ENCODE measurements at regions of chr3 and their contacts with region 1.

Region 1: GRCh38 chr3:107429320-107430181 is 52.3 kb downstream of the CCDC54 start:
- DNase-seq: peak; percentile 77
- ATAC-seq: peak; percentile 74
- H3K4me3 Mint-ChIP-seq: peak overlapping the region; percentile 68
- H3K27ac Mint-ChIP-seq: no peak overlapping the region
- H3K4me1 Mint-ChIP-seq: peaks cover 20% of the 10 kb centered on the region
- H3K27me3 Mint-ChIP-seq: peaks cover 3% of the 10 kb centered on the region

Region 2: GRCh38 chr3:106068795-106069194 is 1360.8 kb before region 1 on chr3:
- CTCF ChIA-PET with region 1: no interaction called
- POLR2A ChIA-PET with region 1: no interaction called
- intact Hi-C with region 1: no loop called
- DNase-seq: no peak
- ATAC-seq: peak; percentile 98
- H3K4me3 Mint-ChIP-seq: no peak overlapping the region
- H3K27ac Mint-ChIP-seq: peak overlapping the region; percentile 53
- H3K4me1 Mint-ChIP-seq: peaks cover 15% of the 10 kb centered on the region
- H3K27me3 Mint-ChIP-seq: no peaks in the 10 kb centered on the region

Region 3: GRCh38 chr3:106814231-106814630 is 615.3 kb before region 1 on chr3:
- CTCF ChIA-PET with region 1: no interaction called
- POLR2A ChIA-PET with region 1: no interaction called
- intact Hi-C with region 1: no loop called
- DNase-seq: no peak
- ATAC-seq: no peak
- H3K4me3 Mint-ChIP-seq: no peak overlapping the region
- H3K27ac Mint-ChIP-seq: no peak overlapping the region
- H3K4me1 Mint-ChIP-seq: no peaks in the 10 kb centered on the region
- H3K27me3 Mint-ChIP-seq: no peaks in the 10 kb centered on the region

Region 4: DNA sequence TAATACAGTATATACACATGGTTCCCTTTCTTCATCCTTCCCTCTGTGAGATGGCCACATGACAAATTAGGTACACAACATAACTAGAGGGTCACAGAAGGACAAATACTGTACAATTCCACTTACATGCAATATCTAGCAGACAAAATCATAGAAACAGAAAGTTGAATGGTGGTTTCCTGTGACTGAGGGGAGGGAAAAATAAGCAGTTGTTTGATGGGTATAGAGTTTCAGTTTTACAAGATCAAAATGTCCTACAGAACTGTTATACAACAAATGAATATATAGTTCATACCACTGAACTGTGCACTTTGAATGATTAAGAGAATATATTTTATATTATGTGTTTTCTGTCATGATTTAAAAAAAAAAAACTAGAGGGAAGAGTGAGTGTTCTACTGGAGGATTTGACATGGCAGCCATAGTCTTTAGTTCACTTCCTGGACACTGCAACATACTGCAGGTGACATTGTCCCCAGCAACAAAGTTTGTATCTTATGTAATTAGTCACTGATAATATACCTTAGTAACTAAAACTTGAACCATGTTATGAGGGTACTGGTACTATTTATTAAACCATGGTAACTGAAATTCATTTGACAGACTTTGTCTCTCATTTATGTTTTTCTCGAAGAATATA is 15.1 kb before region 1 on chr3:
- CTCF ChIA-PET with region 1: interaction called, 16 read pairs
- POLR2A ChIA-PET with region 1: no interaction called
- intact Hi-C with region 1: no loop called
- DNase-seq: no peak
- ATAC-seq: peak; percentile 94
- H3K4me3 Mint-ChIP-seq: no peak overlapping the region
- H3K27ac Mint-ChIP-seq: no peak overlapping the region
- H3K4me1 Mint-ChIP-seq: peaks cover 12% of the 10 kb centered on the region
- H3K27me3 Mint-ChIP-seq: peaks cover 4% of the 10 kb centered on the region

Region 5: GRCh38 chr3:107468802-107469201 is 39.3 kb after region 1 on chr3:
- CTCF ChIA-PET with region 1: no interaction called
- POLR2A ChIA-PET with region 1: no interaction called
- intact Hi-C with region 1: no loop called
- DNase-seq: no peak
- ATAC-seq: no peak
- H3K4me3 Mint-ChIP-seq: no peak overlapping the region
- H3K27ac Mint-ChIP-seq: no peak overlapping the region
- H3K4me1 Mint-ChIP-seq: no peaks in the 10 kb centered on the region
- H3K27me3 Mint-ChIP-seq: peaks cover 17% of the 10 kb centered on the region

Region 6: GRCh38 chr3:107643038-107643883 is 213.7 kb after region 1 on chr3:
- CTCF ChIA-PET with region 1: no interaction called
- POLR2A ChIA-PET with region 1: no interaction called
- intact Hi-C with region 1: no loop called
- DNase-seq: no peak
- ATAC-seq: no peak
- H3K4me3 Mint-ChIP-seq: no peak overlapping the region
- H3K27ac Mint-ChIP-seq: no peak overlapping the region
- H3K4me1 Mint-ChIP-seq: peaks cover 19% of the 10 kb centered on the region
- H3K27me3 Mint-ChIP-seq: no peaks in the 10 kb centered on the region

Measured in activated CD4-positive, alpha-beta T cell treated with anti-CD3 and anti-CD28 coated beads for 36 hours (primary cell).